ENCODE measurements at regions of chr15 and their contacts with region 1.

Region 1: GRCh38 chr15:67065444-67066093 is at the start of gene SMAD3:
- DNase-seq: peak; percentile 42 to 92 (median 66)
- ATAC-seq: peak; percentile 56
- H3K4me3 ChIP-seq: peak within 1 kb of the TSS; percentile 87
- H3K4me3 Mint-ChIP-seq: peak within 1 kb of the TSS; percentile 95
- H3K27ac ChIP-seq: peak within 1 kb of the TSS; percentile 53 to 62
- H3K27ac Mint-ChIP-seq: peak within 1 kb of the TSS; percentile 92
- H3K4me1 ChIP-seq: peaks cover 47% of the 10 kb centered on the region
- H3K4me1 Mint-ChIP-seq: peaks cover 61% of the 10 kb centered on the region
- H3K27me3 ChIP-seq: no peaks in the 10 kb centered on the region
- H3K27me3 Mint-ChIP-seq: no peaks in the 10 kb centered on the region
- CTCF ChIP-seq: no peak
- total RNA-seq, gene SMAD3: 30.0 to 31.0 TPM

Region 2: DNA sequence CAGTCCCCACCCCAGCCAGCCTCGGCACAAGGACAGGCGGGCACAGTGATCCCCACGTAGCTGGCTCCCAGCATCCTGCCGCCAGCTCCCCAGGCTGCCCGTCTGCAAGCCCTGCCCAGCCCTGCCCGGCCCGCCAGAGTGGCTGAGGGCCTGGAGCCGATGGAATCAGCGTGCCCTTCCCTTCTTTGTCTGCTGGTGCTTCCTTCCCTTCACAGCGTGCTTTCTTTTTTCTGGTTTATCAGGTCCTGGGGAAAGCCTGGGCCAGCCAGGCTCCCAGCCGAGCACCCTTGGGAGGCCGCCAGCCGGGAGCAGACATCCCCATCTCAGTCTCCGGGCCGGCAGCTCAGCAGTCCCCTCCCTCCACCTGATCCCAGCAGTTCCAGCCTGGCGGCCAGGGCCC is 418.2 kb before region 1 on chr15:
- CTCF ChIA-PET with region 1: no interaction called
- POLR2A ChIA-PET with region 1: no interaction called
- intact Hi-C with region 1: no loop called
- DNase-seq: no peak
- ATAC-seq: no peak
- H3K4me3 ChIP-seq: no peak overlapping the region
- H3K4me3 Mint-ChIP-seq: no peak overlapping the region
- H3K27ac ChIP-seq: no peak overlapping the region
- H3K27ac Mint-ChIP-seq: no peak overlapping the region
- H3K4me1 ChIP-seq: no peaks in the 10 kb centered on the region
- H3K4me1 Mint-ChIP-seq: no peaks in the 10 kb centered on the region
- H3K27me3 ChIP-seq: no peaks in the 10 kb centered on the region
- H3K27me3 Mint-ChIP-seq: no peaks in the 10 kb centered on the region
- CTCF ChIP-seq: no peak

Region 3: DNA sequence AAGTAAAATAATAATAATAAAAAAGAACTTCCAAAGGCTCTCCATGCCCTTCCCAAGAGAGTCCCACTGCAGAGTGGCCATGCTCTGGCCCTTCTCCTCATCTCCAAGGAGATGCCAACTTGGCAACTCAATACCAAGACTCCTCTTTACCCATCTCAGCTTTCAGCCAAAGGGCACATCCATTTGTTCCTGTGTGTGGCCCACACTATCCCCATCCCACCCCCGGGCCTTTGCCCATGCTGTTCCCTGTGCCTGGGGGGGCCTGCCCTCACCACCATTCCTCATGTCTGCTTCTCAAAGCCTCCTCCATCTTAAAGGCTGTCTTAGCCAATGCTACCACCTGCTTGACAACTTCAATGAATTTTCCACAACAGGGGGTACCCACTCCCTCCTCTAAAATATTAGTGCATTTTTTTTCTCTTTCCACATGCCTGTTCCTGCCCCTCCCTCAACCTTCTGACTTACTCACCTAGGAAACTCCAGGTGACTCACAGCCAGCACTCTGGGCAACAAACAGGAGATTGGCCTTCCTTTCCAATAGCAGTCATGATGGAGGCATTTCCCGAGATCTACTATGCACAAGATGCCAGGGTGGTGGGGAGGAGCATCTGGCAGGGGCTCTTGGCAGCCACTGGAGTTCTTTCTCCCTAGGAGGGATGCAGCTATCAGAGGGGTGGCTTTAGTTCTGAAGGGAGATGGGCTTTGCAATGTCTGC is 109.5 kb before region 1 on chr15:
- CTCF ChIA-PET with region 1: no interaction called
- POLR2A ChIA-PET with region 1: no interaction called
- intact Hi-C with region 1: no loop called
- DNase-seq: peak in 2 of 14 experiments; percentile 15 to 35
- ATAC-seq: no peak
- H3K4me3 ChIP-seq: no peak overlapping the region
- H3K4me3 Mint-ChIP-seq: no peak overlapping the region
- H3K27ac ChIP-seq: no peak overlapping the region
- H3K27ac Mint-ChIP-seq: no peak overlapping the region
- H3K4me1 ChIP-seq: peaks cover 2% of the 10 kb centered on the region
- H3K4me1 Mint-ChIP-seq: no peaks in the 10 kb centered on the region
- H3K27me3 ChIP-seq: peaks cover 0 to 2% of the 10 kb centered on the region in 2 experiments
- H3K27me3 Mint-ChIP-seq: no peaks in the 10 kb centered on the region
- CTCF ChIP-seq: no peak

Region 4: GRCh38 chr15:67080900-67081431 is 15.4 kb after region 1 on chr15:
- CTCF ChIA-PET with region 1: interaction called, 13 read pairs
- POLR2A ChIA-PET with region 1: interaction called, 119 read pairs
- intact Hi-C with region 1: loop called in 1 of 2 experiments (anchors 2 kb)
- DNase-seq: peak in 6 of 14 experiments; percentile 23 to 83 (median 66)
- ATAC-seq: peak; percentile 45
- H3K4me3 ChIP-seq: no peak overlapping the region
- H3K4me3 Mint-ChIP-seq: peak overlapping the region; percentile 32
- H3K27ac ChIP-seq: peak overlapping the region; percentile 45 to 72
- H3K27ac Mint-ChIP-seq: peak overlapping the region; percentile 89
- H3K4me1 ChIP-seq: peaks cover 98% of the 10 kb centered on the region
- H3K4me1 Mint-ChIP-seq: peaks cover 96% of the 10 kb centered on the region
- H3K27me3 ChIP-seq: no peaks in the 10 kb centered on the region
- H3K27me3 Mint-ChIP-seq: no peaks in the 10 kb centered on the region
- CTCF ChIP-seq: no peak

Region 5: DNA sequence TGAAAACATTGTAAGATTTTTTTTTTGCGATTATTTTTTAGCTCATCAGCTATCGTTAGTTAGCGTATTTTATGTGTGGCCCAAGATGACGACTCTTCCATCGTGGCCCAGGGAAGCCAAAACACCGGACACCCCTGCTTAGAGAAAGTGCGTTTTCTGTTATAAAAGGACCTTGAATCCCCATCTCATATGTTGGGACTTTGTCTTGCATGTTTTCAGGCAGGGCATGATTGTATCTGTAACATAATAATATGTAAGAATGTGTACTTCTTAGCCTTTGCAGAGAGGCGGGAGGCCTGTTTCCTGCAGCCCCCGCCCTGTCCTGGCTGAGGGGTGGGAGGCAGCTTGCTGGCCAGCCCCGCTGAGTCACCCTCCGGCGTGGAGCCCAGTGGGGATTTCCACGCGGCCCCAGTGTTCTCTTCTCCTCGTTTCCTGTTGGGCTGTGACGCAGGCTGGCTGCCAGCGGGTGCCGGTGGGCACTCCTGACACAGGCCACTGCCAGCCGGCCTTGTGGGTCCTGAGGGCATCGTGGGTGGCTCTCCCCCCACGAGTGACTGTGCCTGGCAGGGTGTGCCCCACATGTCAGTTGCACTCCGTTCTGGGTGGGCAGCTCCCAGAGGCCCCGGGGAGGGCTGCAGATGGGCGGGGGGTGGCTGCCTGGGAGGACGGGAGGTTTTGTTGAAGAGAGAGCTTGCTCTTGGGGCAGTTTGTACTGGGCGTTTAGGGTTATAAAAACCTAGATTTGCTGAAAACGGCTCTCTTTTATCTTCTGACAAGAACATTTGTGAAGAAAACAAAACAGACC is 55.5 kb after region 1 on chr15:
- CTCF ChIA-PET with region 1: interaction called, 3 read pairs
- POLR2A ChIA-PET with region 1: interaction called, 18 read pairs
- intact Hi-C with region 1: no loop called
- DNase-seq: peak; percentile 67 to 96 (median 82)
- ATAC-seq: peak; percentile 86
- H3K4me3 ChIP-seq: peak overlapping the region; percentile 51
- H3K4me3 Mint-ChIP-seq: peak overlapping the region; percentile 77
- H3K27ac ChIP-seq: peak overlapping the region; percentile 85 to 96
- H3K27ac Mint-ChIP-seq: peak overlapping the region; percentile 96
- H3K4me1 ChIP-seq: peaks cover 94% of the 10 kb centered on the region
- H3K4me1 Mint-ChIP-seq: peaks cover 90% of the 10 kb centered on the region
- H3K27me3 ChIP-seq: no peaks in the 10 kb centered on the region
- H3K27me3 Mint-ChIP-seq: no peaks in the 10 kb centered on the region
- CTCF ChIP-seq: no peak

Region 6: GRCh38 chr15:67134067-67134838 is 68.7 kb after region 1 on chr15:
- CTCF ChIA-PET with region 1: interaction called, 3 read pairs
- POLR2A ChIA-PET with region 1: interaction called, 10 read pairs
- intact Hi-C with region 1: loop called (anchors 5 kb)
- DNase-seq: peak; percentile 50 to 91 (median 58)
- ATAC-seq: peak; percentile 97
- H3K4me3 ChIP-seq: peak overlapping the region; percentile 37
- H3K4me3 Mint-ChIP-seq: peak overlapping the region; percentile 79
- H3K27ac ChIP-seq: peak overlapping the region; percentile 81 to 91
- H3K27ac Mint-ChIP-seq: peak overlapping the region; percentile 96
- H3K4me1 ChIP-seq: peaks cover 92% of the 10 kb centered on the region
- H3K4me1 Mint-ChIP-seq: peaks cover 91% of the 10 kb centered on the region
- H3K27me3 ChIP-seq: no peaks in the 10 kb centered on the region
- H3K27me3 Mint-ChIP-seq: no peaks in the 10 kb centered on the region
- CTCF ChIP-seq: no peak

Region 7: DNA sequence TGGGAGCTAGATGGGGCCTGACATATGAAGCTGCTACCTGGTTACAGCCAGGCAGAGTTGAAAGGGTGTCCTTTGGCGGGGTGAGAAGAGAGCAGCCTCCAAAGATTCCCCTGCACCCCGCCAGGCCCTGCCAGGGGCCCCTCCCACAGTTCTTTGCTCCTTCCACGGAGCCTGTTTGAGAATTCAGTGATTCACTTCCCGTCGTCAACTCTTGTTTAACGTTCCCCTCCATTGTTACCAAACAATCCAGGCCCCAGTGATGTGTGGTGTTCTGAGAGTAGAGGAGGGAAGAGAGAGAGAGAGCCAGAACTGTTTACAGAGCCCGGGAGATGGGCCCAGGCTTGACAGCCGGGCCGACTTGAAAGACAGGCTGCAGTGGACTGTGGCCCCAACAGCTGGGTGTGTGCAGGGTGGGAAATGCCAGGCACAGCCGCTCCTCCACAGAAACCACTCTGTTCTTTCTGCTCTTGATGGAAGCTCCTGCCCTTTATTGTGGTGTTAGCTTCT is 81.4 kb after region 1 on chr15:
- CTCF ChIA-PET with region 1: no interaction called
- POLR2A ChIA-PET with region 1: interaction called, 10 read pairs
- intact Hi-C with region 1: loop called in 1 of 2 experiments (anchors 2 kb)
- DNase-seq: peak in 9 of 14 experiments; percentile 11 to 73 (median 46)
- ATAC-seq: peak; percentile 75
- H3K4me3 ChIP-seq: no peak overlapping the region
- H3K4me3 Mint-ChIP-seq: peak overlapping the region; percentile 52
- H3K27ac ChIP-seq: peak overlapping the region; percentile 5 to 13
- H3K27ac Mint-ChIP-seq: peak overlapping the region; percentile 88
- H3K4me1 ChIP-seq: peaks cover 86% of the 10 kb centered on the region
- H3K4me1 Mint-ChIP-seq: peaks cover 85% of the 10 kb centered on the region
- H3K27me3 ChIP-seq: no peaks in the 10 kb centered on the region
- H3K27me3 Mint-ChIP-seq: no peaks in the 10 kb centered on the region
- CTCF ChIP-seq: no peak

Region 8: GRCh38 chr15:67254238-67255175 is 188.9 kb after region 1 on chr15 and contains the starts of genes AAGAB and IQCH:
- CTCF ChIA-PET with region 1: no interaction called
- POLR2A ChIA-PET with region 1: interaction called, 5 read pairs
- intact Hi-C with region 1: loop called (anchors 10 kb)
- DNase-seq: peak; percentile 86 to 98 (median 96)
- ATAC-seq: peak; percentile 88
- H3K4me3 ChIP-seq: peak within 1 kb of the TSS; percentile 96
- H3K4me3 Mint-ChIP-seq: peak within 1 kb of the TSS; percentile 97
- H3K27ac ChIP-seq: peak within 1 kb of the TSS; percentile 72 to 82
- H3K27ac Mint-ChIP-seq: peak within 1 kb of the TSS; percentile 91
- H3K4me1 ChIP-seq: peaks cover 17% of the 10 kb centered on the region
- H3K4me1 Mint-ChIP-seq: peaks cover 43% of the 10 kb centered on the region
- H3K27me3 ChIP-seq: no peaks in the 10 kb centered on the region
- H3K27me3 Mint-ChIP-seq: no peaks in the 10 kb centered on the region
- CTCF ChIP-seq: no peak
- total RNA-seq, gene AAGAB: 14.2 to 15.6 TPM
- total RNA-seq, gene IQCH: 0.85 to 1.3 TPM

Measured in CD4-positive, alpha-beta T cell (primary cell).